ENCODE measurements at regions of chrX and their contacts with region 1.

Region 1: DNA sequence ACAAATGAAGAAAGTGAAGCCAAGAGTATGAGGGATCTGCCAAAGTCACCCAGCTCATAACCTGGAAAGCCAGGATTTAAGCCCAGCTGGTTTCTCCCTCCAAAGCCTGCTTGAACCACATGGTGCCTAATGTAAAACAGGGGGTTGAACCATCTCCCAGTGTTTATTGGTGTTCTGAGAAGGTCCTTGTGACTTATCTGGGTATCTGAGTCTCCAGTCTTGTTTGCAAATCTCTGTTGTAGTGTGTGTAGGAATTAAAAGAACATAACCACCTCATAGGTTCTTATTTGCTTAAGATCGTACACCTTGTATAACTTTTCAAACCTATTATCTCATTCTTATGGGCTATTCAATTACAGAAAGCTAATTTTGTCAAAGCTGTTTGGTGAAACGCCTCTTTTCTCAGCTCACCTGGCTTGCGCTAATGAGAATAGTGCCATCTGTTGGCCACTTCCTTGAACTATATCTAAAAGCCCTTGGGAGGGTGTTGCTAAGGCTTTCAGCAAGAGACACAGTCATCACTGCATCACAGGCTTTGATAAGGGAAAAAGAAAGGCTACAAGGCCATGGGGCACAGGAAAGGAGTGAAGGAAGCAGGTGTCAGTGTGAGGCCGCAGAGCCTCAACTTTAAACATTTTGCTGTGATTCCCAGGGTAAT is 34.0 kb downstream of the ETDB start:
- DNase-seq: peak; percentile 58
- H3K4me3 Mint-ChIP-seq: no peak overlapping the region
- H3K27ac Mint-ChIP-seq: no peak overlapping the region
- H3K4me1 Mint-ChIP-seq: peaks cover 3% of the 10 kb centered on the region
- H3K27me3 Mint-ChIP-seq: no peaks in the 10 kb centered on the region

Region 2: DNA sequence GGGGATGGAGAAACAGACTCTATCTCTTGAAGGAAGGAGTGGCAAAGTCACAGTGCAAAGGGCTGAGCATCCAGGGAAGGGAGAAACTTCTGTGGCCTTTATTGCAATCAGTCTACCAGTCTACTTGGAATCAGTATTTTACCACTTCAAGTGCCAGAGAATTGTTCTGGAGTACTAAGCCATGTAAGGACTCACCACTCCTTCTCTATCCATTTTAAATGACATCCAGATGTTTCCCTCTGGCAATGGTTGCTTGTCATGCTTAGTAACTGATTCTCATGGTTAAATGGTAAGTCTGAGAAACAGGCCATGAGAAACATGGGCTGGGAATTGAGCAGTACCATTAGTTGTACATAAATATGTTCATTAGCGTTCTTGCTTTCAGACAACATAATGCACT is 116.6 kb before region 1 on chrX:
- CTCF ChIA-PET with region 1: interaction called, 11 read pairs
- intact Hi-C with region 1: loop called (anchors 1 kb)
- DNase-seq: no peak
- H3K4me3 Mint-ChIP-seq: no peak overlapping the region
- H3K27ac Mint-ChIP-seq: no peak overlapping the region
- H3K4me1 Mint-ChIP-seq: no peaks in the 10 kb centered on the region
- H3K27me3 Mint-ChIP-seq: peaks cover 2% of the 10 kb centered on the region

Region 3: GRCh38 chrX:135024526-135024925 is 61.8 kb before region 1 on chrX:
- CTCF ChIA-PET with region 1: no interaction called
- intact Hi-C with region 1: loop called (anchors 5 kb)
- DNase-seq: no peak
- H3K4me3 Mint-ChIP-seq: no peak overlapping the region
- H3K27ac Mint-ChIP-seq: no peak overlapping the region
- H3K4me1 Mint-ChIP-seq: peaks cover 14% of the 10 kb centered on the region
- H3K27me3 Mint-ChIP-seq: peaks cover 7% of the 10 kb centered on the region

Region 4: DNA sequence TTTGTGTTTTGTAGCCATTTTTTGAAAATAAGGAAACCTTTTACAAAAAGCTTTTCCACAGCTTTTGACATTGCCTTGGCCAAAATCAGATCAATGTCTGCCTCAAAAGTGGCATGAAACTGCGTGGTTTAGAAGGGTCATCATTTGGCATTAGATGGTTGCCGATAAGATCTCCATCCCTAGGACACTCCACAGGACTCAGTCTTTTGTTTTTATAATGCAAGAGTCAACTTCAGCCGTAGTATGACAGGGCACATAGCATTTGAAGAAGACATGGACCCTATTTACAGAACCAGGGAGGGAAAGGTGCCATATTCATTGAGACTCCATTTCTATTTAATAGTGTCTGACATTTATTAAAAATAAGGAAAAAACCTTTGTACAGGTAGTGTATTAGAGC is 35.7 kb before region 1 on chrX:
- CTCF ChIA-PET with region 1: interaction called, 6 read pairs
- intact Hi-C with region 1: loop called (anchors 1 kb)
- DNase-seq: no peak
- H3K4me3 Mint-ChIP-seq: peak overlapping the region; percentile 87
- H3K27ac Mint-ChIP-seq: no peak overlapping the region
- H3K4me1 Mint-ChIP-seq: peaks cover 21% of the 10 kb centered on the region
- H3K27me3 Mint-ChIP-seq: no peaks in the 10 kb centered on the region

Region 5: DNA sequence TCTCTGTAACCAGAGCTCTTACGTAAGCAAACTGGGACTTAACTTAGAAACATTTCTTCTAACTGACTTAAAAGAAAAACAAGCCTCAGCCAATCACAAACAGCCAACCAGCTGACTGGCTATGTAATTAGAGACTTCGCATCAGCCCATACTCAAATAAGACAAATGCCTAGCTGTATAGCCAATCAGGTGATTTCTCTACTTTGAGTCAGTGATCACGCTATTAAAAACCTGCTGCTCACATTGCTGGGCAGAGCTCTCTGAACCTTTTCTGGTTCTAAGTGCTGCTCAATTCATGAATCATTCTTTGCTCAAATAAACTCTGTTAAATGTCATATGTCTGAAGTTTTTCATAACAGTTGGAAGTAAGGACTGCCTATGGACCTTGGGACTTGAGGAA is 325.6 kb after region 1 on chrX:
- CTCF ChIA-PET with region 1: no interaction called
- intact Hi-C with region 1: no loop called
- DNase-seq: no peak
- H3K4me3 Mint-ChIP-seq: no peak overlapping the region
- H3K27ac Mint-ChIP-seq: no peak overlapping the region
- H3K4me1 Mint-ChIP-seq: peaks cover 5% of the 10 kb centered on the region
- H3K27me3 Mint-ChIP-seq: no peaks in the 10 kb centered on the region

Measured in activated naive CD4-positive, alpha-beta T cell treated with anti-CD3 and anti-CD28 coated beads for 36 hours (primary cell).